ENCODE measurements at regions of chr1 and their contacts with region 1.

Region 1: DNA sequence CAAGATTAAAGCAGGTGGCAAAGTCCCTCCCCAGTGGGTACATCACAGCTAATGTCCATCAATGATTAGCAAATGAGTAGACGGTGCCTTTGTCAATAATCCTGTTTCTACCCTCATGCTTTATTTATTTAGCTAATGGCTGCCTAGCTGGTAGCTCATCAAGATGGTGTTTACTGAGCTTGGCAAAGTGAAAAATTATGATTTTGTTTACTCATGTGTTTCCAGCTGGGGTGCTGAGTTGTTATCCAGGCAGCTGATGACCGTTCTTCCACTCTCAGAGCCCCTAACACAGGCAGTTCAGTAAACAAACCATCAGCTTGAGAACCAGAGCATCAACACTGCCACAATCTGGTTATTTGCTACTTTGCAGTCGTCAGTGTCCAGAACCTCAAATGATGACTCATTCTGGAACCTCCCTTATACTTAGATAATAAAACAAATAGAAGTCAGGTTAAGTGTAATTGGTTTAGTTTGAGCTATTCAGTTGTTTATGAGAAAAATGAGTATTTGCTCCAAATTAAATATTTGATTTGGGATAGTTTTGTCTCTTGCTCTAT is 163.9 kb downstream of the ST6GALNAC5 start:
- DNase-seq: peak; percentile 87
- ATAC-seq: peak; percentile 89
- H3K4me3 ChIP-seq: no peak overlapping the region
- H3K27ac ChIP-seq: peak overlapping the region; percentile 74
- H3K4me1 ChIP-seq: peaks cover 20% of the 10 kb centered on the region
- H3K27me3 ChIP-seq: no peaks in the 10 kb centered on the region
- CTCF ChIP-seq: peak; percentile 62

Region 2: DNA sequence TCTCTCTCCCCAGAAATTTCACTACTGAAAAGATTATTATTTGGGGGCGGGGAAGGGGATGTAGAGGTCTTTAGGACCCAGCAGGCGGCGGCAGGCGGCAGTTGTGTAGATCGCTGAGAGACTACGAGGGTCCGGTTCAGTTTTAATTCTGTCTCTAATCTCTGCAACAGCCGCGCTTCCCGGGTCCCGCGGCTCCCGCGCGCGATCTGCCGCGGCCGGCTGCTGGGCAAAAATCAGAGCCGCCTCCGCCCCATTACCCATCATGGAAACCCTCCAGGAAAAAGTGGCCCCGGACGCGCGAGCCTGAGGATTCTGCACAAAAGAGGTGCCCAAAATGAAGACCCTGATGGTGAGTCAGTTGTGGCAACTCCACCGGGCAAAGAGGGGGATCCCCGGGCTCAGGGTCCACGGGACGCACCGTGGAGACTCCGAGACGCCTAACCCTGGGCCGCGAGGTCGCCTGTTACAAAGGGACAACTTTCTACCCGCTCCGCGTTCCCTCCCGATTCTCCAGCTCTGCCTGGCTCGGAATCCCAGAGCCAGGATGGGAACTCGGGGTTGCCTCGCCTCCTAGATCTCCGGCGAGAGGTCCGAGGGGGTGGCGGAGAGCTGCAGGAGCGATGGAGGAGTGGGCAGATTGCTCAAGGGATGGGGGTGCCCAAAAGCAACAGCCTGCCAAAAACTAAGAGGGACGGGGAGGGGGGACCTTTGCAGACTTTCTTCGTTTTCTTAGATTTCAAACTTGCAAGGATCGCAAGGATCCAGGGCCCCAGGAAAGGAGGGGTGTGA is 163.6 kb before region 1 on chr1 and contains the start of gene ST6GALNAC5:
- CTCF ChIA-PET with region 1: no interaction called
- POLR2A ChIA-PET with region 1: no interaction called
- intact Hi-C with region 1: loop called (anchors 1 kb)
- DNase-seq: peak; percentile 16
- ATAC-seq: peak; percentile 82
- H3K4me3 ChIP-seq: peak within 1 kb of the TSS; percentile 78
- H3K27ac ChIP-seq: no peak within 1 kb of the TSS
- H3K4me1 ChIP-seq: peaks cover 11% of the 10 kb centered on the region
- H3K27me3 ChIP-seq: peaks cover 70% of the 10 kb centered on the region
- CTCF ChIP-seq: no peak
- total RNA-seq, gene ST6GALNAC5: 0.36 and 1.2 TPM in 2 replicates

Region 3: DNA sequence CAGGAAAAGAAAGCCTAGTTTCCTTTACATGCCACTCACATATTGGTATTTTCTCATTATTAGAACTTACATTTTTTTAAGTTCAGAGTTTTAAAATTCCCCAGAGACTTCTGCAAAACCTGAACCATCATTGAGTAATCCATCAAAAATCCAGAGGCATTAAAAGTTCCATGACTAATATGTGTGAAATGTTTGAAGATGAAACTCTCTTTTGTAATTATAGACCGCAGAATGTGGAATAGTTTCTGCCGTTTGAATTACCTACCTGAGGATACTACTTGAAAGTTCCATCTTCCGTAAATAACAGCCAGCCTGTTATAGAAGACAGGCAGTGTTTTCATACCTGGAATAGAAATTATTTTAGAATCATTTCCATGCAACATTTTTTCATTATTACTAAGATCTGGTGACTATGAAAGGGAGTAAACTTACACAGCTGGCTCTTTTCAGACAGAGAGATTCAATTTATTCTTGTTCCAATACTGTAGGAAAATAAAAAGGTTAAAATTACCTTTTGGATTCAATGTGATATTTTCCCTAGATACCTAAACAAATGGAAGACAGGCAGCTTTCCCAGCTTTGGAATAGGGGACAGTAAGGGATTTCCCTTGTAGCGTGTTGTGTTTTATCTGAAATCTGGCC is 32.5 kb before region 1 on chr1:
- CTCF ChIA-PET with region 1: no interaction called
- POLR2A ChIA-PET with region 1: no interaction called
- intact Hi-C with region 1: loop called (anchors 1 kb)
- DNase-seq: peak; percentile 96
- ATAC-seq: peak; percentile 98
- H3K4me3 ChIP-seq: 0 out of 2 replicates have a peak overlapping the region, but pooled peaks have one; percentile 6
- H3K27ac ChIP-seq: peak overlapping the region; percentile 88
- H3K4me1 ChIP-seq: peaks cover 26% of the 10 kb centered on the region
- H3K27me3 ChIP-seq: no peaks in the 10 kb centered on the region
- CTCF ChIP-seq: no peak